ENCODE measurements at regions of chr17 and their contacts with region 1.

Region 1: DNA sequence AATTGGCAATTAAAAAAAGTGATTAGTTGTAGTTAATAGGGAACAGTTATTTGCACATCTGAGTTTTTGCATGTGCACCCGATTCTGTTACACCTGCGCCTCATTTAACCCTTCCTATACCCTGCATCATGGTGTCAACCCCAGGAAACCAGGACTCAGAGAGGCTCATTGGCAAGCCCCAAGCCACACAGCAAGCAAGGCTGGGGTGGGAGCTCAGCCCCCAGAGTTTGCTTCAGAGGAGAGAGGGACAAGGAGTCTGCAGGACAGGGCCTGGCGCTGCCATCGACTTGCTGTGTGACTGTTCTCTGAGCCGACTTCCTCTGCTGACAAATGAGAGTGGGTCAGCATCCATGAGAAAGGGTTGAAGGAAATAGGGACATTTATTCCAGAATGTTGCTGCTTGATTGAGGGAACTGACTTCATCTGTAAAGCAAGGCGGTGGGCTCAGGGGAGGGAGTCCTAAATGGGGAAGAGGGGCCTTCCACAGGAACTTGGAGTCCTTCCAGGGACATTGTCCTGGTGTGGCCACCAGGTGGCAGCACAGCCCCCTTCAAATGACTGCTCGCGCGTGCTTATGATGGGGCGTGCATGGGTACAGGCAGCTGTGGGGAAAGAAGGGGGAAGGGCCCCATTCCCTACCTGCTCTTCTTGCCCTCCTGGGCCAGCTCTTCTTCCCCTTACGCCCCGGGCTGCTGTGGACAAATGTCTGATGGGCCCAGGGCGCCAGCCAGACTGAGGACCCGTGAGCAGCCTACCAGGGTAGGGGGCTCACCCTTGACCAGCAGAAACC is 51.6 kb downstream of the NT5M start:
- DNase-seq: peak; percentile 65 to 75 (median 70)
- ATAC-seq: peak; percentile 75
- H3K4me3 ChIP-seq: no peak overlapping the region
- H3K27ac ChIP-seq: no peak overlapping the region
- H3K4me1 ChIP-seq: no peaks in the 10 kb centered on the region
- H3K27me3 ChIP-seq: no peaks in the 10 kb centered on the region
- CTCF ChIP-seq: peak; percentile 65 to 88 (median 87)
- POLR2A ChIP-seq: no peak

Region 2: DNA sequence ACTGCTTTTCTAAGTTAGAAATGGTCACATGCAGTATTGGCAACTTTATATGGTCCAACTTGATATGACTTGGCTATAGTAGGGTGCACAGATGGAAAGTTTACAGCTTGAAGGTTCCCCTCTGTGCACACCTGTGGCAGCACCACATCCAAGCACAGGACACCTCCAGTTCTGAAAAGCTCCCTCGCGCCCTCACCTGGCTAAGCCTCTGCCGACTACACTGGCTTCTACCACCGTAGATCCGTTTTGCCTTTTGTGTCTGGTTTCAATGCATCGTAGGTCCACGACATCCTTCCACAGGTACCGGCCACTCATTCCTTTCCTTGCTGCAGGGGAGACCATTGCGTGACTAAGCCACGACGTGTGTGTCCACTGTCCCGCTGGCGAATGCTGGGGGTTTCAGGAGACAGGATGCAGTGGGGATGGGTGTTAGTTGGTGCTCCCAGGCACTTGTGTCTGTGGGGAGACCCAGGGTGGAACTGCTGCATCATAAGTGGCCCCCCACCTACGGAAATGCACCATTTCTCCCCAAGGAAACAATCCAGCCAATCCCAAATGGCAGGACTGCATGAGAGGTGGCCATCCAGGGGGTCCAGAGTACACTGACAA is 146.3 kb after region 1 on chr17:
- intact Hi-C with region 1: loop called (anchors 5 kb)
- DNase-seq: peak in 1 of 4 donors; percentile 70
- ATAC-seq: no peak
- H3K4me3 ChIP-seq: no peak overlapping the region
- H3K27ac ChIP-seq: no peak overlapping the region
- H3K4me1 ChIP-seq: peaks cover 12% of the 10 kb centered on the region
- H3K27me3 ChIP-seq: no peaks in the 10 kb centered on the region
- CTCF ChIP-seq: peak in 1 of 7 experiments; percentile 41
- POLR2A ChIP-seq: no peak

Region 3: DNA sequence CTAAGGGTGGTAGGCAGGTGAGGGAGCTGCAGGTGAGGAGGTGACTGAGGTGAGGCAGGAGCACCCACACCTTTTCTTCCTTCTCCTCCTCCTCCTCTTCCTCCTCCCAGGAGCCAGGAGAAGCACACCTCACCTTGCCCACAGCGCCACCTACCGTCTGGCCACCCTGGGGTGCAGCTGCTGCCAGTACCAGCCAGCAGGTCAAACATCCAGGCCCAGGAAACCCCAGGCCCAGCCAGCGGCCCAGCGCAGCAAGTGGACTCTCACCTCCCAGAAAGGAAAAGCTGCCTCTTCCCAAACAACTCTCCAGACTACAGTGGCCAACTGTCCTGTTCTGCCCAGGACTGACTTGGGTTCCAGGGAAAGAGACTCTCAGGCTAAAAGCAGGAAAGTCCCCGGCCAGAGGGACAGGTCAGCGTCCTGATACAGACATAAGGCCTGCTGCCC is 214.0 kb after region 1 on chr17:
- intact Hi-C with region 1: loop called (anchors 5 kb)
- DNase-seq: peak; percentile 85 to 90 (median 87)
- ATAC-seq: peak; percentile 66
- H3K4me3 ChIP-seq: no peak overlapping the region
- H3K27ac ChIP-seq: peak overlapping the region in 3 of 4 donors; percentile 13 to 60 (median 42)
- H3K4me1 ChIP-seq: peaks cover 46% of the 10 kb centered on the region
- H3K27me3 ChIP-seq: no peaks in the 10 kb centered on the region
- CTCF ChIP-seq: peak; percentile 77 to 93 (median 88)
- POLR2A ChIP-seq: no peak

Region 4: DNA sequence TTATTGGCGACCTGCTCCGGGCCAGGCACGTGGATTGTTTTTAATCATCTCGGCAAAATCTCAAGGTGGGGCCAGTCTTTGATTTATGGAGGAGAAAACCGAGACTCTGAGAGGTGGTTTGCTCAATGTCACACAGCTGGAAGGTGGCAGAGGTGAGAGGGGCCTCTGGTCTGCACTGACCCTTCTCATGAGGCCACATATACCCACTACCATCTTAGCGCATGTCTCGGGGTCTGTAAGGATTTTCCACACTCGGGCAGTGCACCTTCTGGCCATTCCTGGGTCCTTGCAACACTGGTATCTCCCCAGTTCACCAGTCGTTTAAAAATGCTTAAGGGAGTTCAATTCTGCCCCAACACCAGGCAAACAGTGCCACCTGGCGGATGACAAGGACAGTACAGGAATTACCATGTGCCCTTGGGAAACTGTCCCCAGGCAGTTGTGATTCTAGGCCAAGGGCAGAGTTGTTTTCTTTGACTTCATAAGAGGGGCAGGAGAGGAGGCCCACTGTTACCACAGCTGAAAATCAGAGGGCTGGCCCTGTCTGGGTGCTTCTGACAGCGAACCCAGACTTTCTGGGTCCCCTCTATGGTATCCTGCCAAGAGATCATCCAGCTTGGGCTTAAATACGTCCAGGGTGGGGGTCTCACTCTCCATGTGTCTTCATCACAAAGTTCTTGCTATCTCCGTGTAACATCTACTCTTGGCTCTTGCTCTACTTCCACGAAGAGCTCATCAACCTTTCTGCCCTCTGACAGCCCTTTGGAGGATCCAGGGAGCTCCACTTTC is 287.1 kb after region 1 on chr17:
- intact Hi-C with region 1: loop called (anchors 2 kb)
- DNase-seq: peak; percentile 81 to 82 (median 82)
- ATAC-seq: peak; percentile 88
- H3K4me3 ChIP-seq: no peak overlapping the region
- H3K27ac ChIP-seq: no peak overlapping the region
- H3K4me1 ChIP-seq: no peaks in the 10 kb centered on the region
- H3K27me3 ChIP-seq: no peaks in the 10 kb centered on the region
- CTCF ChIP-seq: peak; percentile 81 to 96 (median 93)
- POLR2A ChIP-seq: no peak

Measured in body of pancreas (tissue), 4 donors.